Cardiac septum (tissue), 1 donor: ENCODE measurements at regions of chr2 and their contacts with region 1.

Region 1: GRCh38 chr2:136378712-136379595 is 261.0 kb upstream of the CXCR4 start:
- DNase-seq: no peak

Region 2: GRCh38 chr2:135913727-135914365 is 465.1 kb before region 1 on chr2:
- intact Hi-C with region 1: loop called (anchors 2 kb)
- DNase-seq: no peak

Region 3: DNA sequence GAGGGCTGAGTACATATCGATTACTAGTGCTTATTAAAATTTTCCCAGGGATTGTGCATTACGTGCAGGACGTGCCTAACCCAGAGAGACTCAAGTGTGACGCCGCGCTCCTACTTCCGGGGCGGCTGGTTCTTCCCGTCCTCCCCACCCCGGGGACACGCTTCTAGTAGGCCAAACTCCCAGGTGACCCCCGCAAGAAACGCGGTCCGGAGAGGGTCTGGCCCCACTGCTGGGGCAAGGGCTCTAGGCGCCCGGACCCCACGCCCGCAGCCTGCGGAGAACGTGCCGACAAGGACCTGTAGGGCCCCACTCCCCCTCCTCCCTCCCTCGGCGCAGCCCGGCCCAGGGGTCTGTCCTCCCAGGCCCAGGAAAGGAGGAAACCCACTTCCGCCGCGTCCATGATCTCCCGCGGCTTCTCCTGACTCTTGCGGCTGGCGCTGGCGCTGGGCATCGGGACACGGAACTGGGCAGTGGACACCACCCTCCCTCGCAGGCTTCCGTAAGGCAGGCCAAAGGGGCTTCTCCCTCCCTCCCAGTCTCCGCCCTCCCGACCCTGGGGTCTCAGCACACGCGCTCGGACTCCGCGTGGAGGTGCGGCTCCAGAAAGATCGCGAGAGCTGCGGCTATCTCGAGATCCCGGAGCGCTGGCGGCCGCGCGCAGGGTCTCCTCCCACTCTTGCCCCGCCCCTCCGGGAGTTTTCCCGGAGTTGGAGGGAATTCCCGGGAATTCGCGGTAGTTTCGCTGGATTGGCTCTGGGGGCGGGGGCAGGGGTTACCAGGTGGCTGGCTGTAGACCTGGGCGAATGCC is 393.7 kb before region 1 on chr2 and contains the start of gene DARS1:
- intact Hi-C with region 1: loop called (anchors 10 kb)
- DNase-seq: peak; percentile 95
- total RNA-seq, gene DARS1: 52.9 TPM

Region 4: GRCh38 chr2:136117909-136118818 is 260.8 kb before region 1 on chr2 and contains the start of gene CXCR4:
- intact Hi-C with region 1: loop called (anchors 5 kb)
- DNase-seq: peak; percentile 93
- total RNA-seq, gene CXCR4: 4.4 TPM

Region 5: GRCh38 chr2:136394136-136395060 is 15.4 kb after region 1 on chr2:
- intact Hi-C with region 1: no loop called
- DNase-seq: no peak

Region 6: GRCh38 chr2:136557203-136557602 is 178.2 kb after region 1 on chr2:
- intact Hi-C with region 1: no loop called
- DNase-seq: no peak